Activated naive CD8-positive, alpha-beta T cell treated with anti-CD3 and anti-CD28 coated beads, Interleukin-2, amount 10 ng/mL, durations not matched to agents 7 days and 5 days (primary cell): ENCODE measurements at regions of chr1 and their contacts with region 1.

Region 1: DNA sequence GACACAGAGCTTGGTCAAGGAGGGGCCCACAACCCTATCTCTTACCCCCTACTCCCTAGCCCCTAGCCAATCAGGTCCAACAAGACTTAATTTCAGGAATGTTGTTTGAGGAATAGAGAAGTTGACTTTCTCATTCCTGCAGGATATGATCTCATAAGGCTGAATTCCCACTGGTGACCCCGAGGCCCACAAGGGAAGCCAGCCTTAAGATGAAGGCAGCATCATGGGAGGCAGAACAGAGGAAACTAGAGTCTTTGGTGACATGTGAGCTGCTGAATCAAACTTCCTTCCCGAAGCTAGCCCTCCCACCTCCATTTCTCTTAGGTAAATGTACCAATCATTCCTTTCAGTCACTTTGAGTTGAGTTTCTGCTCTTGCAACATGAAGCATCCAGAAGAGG is 9.1 kb upstream of the PDIK1L start:
- DNase-seq: no peak
- ATAC-seq: no peak
- H3K4me3 Mint-ChIP-seq: no peak overlapping the region
- H3K27ac Mint-ChIP-seq: no peak overlapping the region
- H3K4me1 Mint-ChIP-seq: peaks cover 13% of the 10 kb centered on the region
- H3K27me3 Mint-ChIP-seq: peaks cover 21% of the 10 kb centered on the region

Region 2: GRCh38 chr1:26145041-26145959 is 42.8 kb after region 1 on chr1:
- POLR2A ChIA-PET with region 1: interaction called, 15 read pairs
- DNase-seq: peak; percentile 68
- ATAC-seq: peak; percentile 79
- H3K4me3 Mint-ChIP-seq: no peak overlapping the region
- H3K27ac Mint-ChIP-seq: no peak overlapping the region
- H3K4me1 Mint-ChIP-seq: peaks cover 5% of the 10 kb centered on the region
- H3K27me3 Mint-ChIP-seq: peaks cover 19% of the 10 kb centered on the region